Activated T-helper 1 cell treated with anti-CD3 and anti-CD28 coated beads, Interleukin-12 subunit alpha, Interleukin-12 subunit beta, Interleukin-2, Interleukin-4 antibody, amounts not matched to agents 30 ng/mL and 10 ng/mL and 1 ng/mL, durations not matched to agents 14 hours and 24 hours and 36 hours (primary cell): ENCODE measurements at regions of chr16 and their contacts with region 1.

Region 1: GRCh38 chr16:74606521-74607310 is at the start of gene GLG1:
- DNase-seq: peak; percentile 89
- H3K4me3 Mint-ChIP-seq: peak within 1 kb of the TSS; percentile 92
- H3K27ac Mint-ChIP-seq: peak within 1 kb of the TSS; percentile 92
- H3K4me1 Mint-ChIP-seq: peaks cover 64% of the 10 kb centered on the region
- H3K27me3 Mint-ChIP-seq: no peaks in the 10 kb centered on the region
- total RNA-seq, gene GLG1: 66.5 and 71.8 TPM in 2 replicates

Region 2: GRCh38 chr16:74372953-74373846 is 233.5 kb before region 1 on chr16:
- intact Hi-C with region 1: loop called (anchors 2 kb)
- DNase-seq: no peak
- H3K4me3 Mint-ChIP-seq: no peak overlapping the region
- H3K27ac Mint-ChIP-seq: no peak overlapping the region
- H3K4me1 Mint-ChIP-seq: peaks cover 6% of the 10 kb centered on the region
- H3K27me3 Mint-ChIP-seq: no peaks in the 10 kb centered on the region

Region 3: GRCh38 chr16:74577882-74578366 is 28.8 kb before region 1 on chr16:
- intact Hi-C with region 1: loop called (anchors 1 kb)
- DNase-seq: no peak
- H3K4me3 Mint-ChIP-seq: no peak overlapping the region
- H3K27ac Mint-ChIP-seq: no peak overlapping the region
- H3K4me1 Mint-ChIP-seq: peaks cover 43% of the 10 kb centered on the region
- H3K27me3 Mint-ChIP-seq: no peaks in the 10 kb centered on the region

Region 4: GRCh38 chr16:74695450-74696422 is 89.0 kb after region 1 on chr16:
- intact Hi-C with region 1: loop called (anchors 2 kb)
- DNase-seq: peak; percentile 66
- H3K4me3 Mint-ChIP-seq: peak overlapping the region; percentile 84
- H3K27ac Mint-ChIP-seq: peak overlapping the region; percentile 70
- H3K4me1 Mint-ChIP-seq: peaks cover 50% of the 10 kb centered on the region
- H3K27me3 Mint-ChIP-seq: no peaks in the 10 kb centered on the region

Region 5: DNA sequence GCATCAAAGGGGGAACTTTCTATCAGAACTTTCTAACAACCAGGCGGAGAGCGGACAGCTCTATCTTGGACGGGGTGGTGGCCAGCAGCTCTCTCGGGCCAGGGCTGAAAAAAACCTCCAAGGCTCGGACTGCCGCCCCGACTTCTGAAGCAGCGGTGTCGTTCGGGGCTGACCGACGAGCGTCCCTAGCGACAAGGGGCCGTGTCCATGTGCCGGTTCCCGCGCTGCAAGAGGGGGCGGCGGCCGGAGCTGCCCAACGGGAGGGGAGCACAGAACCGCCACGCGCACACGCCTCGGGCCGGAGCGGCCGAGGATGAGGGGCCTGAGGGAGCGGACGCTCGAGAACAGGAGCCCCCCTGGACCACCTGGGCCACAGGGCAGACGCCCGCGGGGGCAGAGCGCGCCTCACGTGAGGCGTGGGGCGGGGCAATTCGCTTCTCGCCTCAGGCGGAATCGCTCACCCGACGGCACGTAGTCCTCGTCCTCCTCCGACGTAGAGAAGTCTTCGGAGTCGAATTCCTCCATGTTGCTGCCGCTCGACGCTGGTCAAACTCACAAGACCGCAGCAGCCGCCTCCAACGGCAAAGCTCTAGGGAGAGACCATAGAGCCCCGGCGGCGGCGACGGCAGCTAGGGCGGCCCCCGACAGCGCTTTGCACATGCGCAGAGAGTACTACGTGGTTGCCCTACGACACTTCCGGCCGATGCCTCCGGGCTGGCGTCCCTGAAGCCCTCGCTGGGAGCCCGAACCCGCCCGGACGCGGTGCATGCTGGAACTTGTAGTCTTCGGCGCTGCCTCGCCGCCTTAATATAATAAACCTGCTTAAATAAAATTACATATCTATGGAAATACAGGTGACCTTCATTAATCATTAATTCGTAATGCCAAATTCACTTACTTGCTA is 826.4 kb after region 1 on chr16 and contains the start of gene CFDP1:
- intact Hi-C with region 1: loop called (anchors 5 kb)
- DNase-seq: peak; percentile 93
- H3K4me3 Mint-ChIP-seq: peak within 1 kb of the TSS; percentile 85
- H3K27ac Mint-ChIP-seq: peak within 1 kb of the TSS; percentile 99
- H3K4me1 Mint-ChIP-seq: peaks cover 21% of the 10 kb centered on the region
- H3K27me3 Mint-ChIP-seq: no peaks in the 10 kb centered on the region
- total RNA-seq, gene CFDP1: 35.4 TPM in 2 replicates

Region 6: GRCh38 chr16:75647492-75648264 is 1041.0 kb after region 1 on chr16 and contains the starts of genes KARS1 and TERF2IP:
- intact Hi-C with region 1: loop called (anchors 10 kb)
- DNase-seq: peak; percentile 96
- H3K4me3 Mint-ChIP-seq: peak within 1 kb of the TSS; percentile 96
- H3K27ac Mint-ChIP-seq: peak within 1 kb of the TSS; percentile 97
- H3K4me1 Mint-ChIP-seq: peaks cover 58% of the 10 kb centered on the region
- H3K27me3 Mint-ChIP-seq: no peaks in the 10 kb centered on the region
- total RNA-seq, gene KARS1: 256 and 271 TPM in 2 replicates
- total RNA-seq, gene TERF2IP: 94.3 and 98.5 TPM in 2 replicates